ENCODE measurements at regions of chr11 and their contacts with region 1.

Region 1: GRCh38 chr11:46472670-46472994 is 81.1 kb upstream of the CHRM4 start:
- DNase-seq: no peak
- H3K4me3 ChIP-seq: no peak overlapping the region
- CTCF ChIP-seq: no peak

Region 2: GRCh38 chr11:46378811-46379481 is 93.7 kb before region 1 on chr11:
- in situ Hi-C with region 1: loop called (anchors 5 kb)
- DNase-seq: no peak
- H3K4me3 ChIP-seq: no peak overlapping the region
- CTCF ChIP-seq: no peak

Region 3: GRCh38 chr11:46537537-46538295 is 65.1 kb after region 1 on chr11:
- in situ Hi-C with region 1: no loop called
- DNase-seq: peak; percentile 78
- H3K4me3 ChIP-seq: no peak overlapping the region
- CTCF ChIP-seq: peak; percentile 99

Measured in astrocyte of the cerebellum (primary cell).